Caco-2 (cell line): ENCODE measurements at regions of chr9 and their contacts with region 1.

Region 1: DNA sequence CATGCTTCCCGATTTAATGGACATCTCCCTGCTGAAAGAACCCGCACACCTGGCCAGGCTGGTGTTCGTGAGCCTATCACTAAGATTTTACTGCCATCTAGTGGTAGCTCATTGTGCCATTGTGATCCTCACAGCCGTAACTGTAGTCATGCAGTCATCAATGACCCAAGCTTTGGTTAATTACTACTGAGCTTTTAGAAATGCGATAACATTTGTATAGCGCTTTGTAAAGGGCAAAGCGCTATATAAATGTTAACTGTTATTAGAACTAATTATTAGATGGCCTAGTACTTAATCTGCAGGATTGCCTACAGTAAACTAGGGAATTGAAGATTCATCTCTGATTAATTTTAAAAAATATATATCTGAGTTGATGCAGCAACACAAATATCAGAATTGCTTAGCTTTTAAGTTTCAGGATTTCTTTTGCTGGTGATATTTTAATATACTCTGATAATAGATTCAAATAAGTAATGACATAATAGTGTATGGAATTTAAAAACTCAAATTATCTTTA is 90.2 kb downstream of the HACD4 start:
- DNase-seq: peak; percentile 56 to 69
- H3K4me3 ChIP-seq: no peak overlapping the region
- H3K4me3 Mint-ChIP-seq: no peak overlapping the region
- H3K27ac Mint-ChIP-seq: no peak overlapping the region
- H3K4me1 ChIP-seq: 0 out of 2 replicates have a peak, but pooled peaks cover 4% of the 10 kb centered on the region
- H3K4me1 Mint-ChIP-seq: no peaks in the 10 kb centered on the region
- H3K27me3 ChIP-seq: no peaks in the 10 kb centered on the region
- H3K27me3 Mint-ChIP-seq: no peaks in the 10 kb centered on the region
- CTCF ChIP-seq: peak; percentile 55 to 71

Region 2: GRCh38 chr9:20256284-20256948 is 684.8 kb before region 1 on chr9:
- CTCF ChIA-PET with region 1: no interaction called
- POLR2A ChIA-PET with region 1: no interaction called
- intact Hi-C with region 1: no loop called
- DNase-seq: no peak
- H3K4me3 ChIP-seq: no peak overlapping the region
- H3K4me3 Mint-ChIP-seq: no peak overlapping the region
- H3K27ac Mint-ChIP-seq: no peak overlapping the region
- H3K4me1 ChIP-seq: no peaks in the 10 kb centered on the region
- H3K4me1 Mint-ChIP-seq: no peaks in the 10 kb centered on the region
- H3K27me3 ChIP-seq: no peaks in the 10 kb centered on the region
- H3K27me3 Mint-ChIP-seq: no peaks in the 10 kb centered on the region
- CTCF ChIP-seq: no peak

Region 3: DNA sequence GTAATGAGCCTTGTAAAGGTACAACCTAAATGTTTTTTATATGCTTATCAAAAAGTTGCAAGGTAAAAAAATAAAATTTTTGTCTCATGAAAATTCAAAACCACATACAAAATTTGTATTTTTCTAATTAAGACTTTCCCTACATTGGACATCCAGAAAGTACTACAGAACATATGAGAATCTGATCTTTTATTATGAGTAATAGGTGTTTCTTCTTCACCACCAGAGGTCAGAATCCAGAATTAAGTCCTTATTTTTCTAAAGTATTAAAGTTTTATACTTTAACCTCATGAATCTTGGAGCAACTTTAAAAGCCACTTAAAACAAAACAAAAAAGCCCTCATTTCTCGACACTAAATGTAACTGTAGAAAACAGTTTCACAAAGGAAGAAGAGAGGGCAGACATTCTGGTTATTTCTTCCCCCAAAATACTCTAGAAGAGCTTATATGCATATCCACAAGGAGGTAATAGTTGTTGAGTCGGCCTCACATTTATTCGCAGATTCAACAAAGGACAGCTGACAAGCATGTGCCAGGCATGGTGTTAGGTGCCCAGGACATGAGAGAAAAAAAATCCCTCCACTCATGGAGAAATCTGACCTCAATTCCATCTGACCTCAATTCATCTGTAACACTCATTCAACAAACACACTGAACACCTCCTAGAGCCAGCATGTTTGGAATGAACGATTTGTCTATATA is 388.2 kb before region 1 on chr9:
- CTCF ChIA-PET with region 1: no interaction called
- POLR2A ChIA-PET with region 1: no interaction called
- intact Hi-C with region 1: loop called (anchors 2 kb)
- DNase-seq: no peak
- H3K4me3 ChIP-seq: no peak overlapping the region
- H3K4me3 Mint-ChIP-seq: no peak overlapping the region
- H3K27ac Mint-ChIP-seq: no peak overlapping the region
- H3K4me1 ChIP-seq: peaks cover 36% of the 10 kb centered on the region
- H3K4me1 Mint-ChIP-seq: peaks cover 41% of the 10 kb centered on the region
- H3K27me3 ChIP-seq: no peaks in the 10 kb centered on the region
- H3K27me3 Mint-ChIP-seq: no peaks in the 10 kb centered on the region
- CTCF ChIP-seq: peak in 1 of 2 experiments; percentile 2

Region 4: DNA sequence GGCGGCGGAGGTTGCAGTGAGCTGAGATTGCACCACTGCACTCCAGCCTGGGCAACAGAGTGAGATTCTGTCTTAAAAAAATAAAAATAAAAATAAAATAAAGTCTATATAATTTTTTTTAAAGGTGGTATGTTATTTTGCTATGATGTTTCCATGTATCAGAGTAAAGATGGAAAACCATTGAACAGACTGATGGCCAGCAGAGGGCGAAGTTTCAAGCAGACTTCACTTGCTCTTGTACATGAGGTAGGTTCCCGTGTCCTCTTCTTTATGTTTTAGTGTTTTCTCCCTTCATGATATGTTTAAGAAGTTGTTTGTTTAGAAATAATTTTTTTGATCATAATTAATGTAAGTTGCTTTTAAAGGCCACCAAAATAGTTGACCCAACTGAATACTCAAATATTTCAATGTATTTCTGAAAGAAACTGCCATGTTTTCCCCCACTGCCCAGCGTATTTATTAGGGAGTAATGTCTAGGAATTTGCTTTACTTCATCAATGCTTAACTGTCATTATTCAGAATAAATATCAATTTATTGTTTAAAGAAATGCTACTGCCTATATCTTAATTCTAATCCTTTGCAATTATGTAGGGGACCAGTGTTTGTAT is 56.1 kb before region 1 on chr9:
- CTCF ChIA-PET with region 1: interaction called, 7 read pairs
- POLR2A ChIA-PET with region 1: no interaction called
- intact Hi-C with region 1: loop called (anchors 1 kb)
- DNase-seq: peak; percentile 48 to 49
- H3K4me3 ChIP-seq: no peak overlapping the region
- H3K4me3 Mint-ChIP-seq: no peak overlapping the region
- H3K27ac Mint-ChIP-seq: no peak overlapping the region
- H3K4me1 ChIP-seq: no peaks in the 10 kb centered on the region
- H3K4me1 Mint-ChIP-seq: no peaks in the 10 kb centered on the region
- H3K27me3 ChIP-seq: no peaks in the 10 kb centered on the region
- H3K27me3 Mint-ChIP-seq: no peaks in the 10 kb centered on the region
- CTCF ChIP-seq: peak; percentile 31 to 68